GM23248 (cell line): ENCODE measurements at regions of chr9 and their contacts with region 1.

Region 1: GRCh38 chr9:6907772-6908381 is 150.1 kb downstream of the KDM4C start:
- DNase-seq: peak; percentile 48
- H3K4me3 ChIP-seq: no peak overlapping the region
- H3K27ac ChIP-seq: no peak overlapping the region
- H3K4me1 ChIP-seq: peaks cover 10% of the 10 kb centered on the region
- H3K27me3 ChIP-seq: no peaks in the 10 kb centered on the region

Region 2: GRCh38 chr9:7045361-7045760 is 137.5 kb after region 1 on chr9:
- in situ Hi-C with region 1: loop called (anchors 10 kb)
- DNase-seq: peak; percentile 49
- H3K4me3 ChIP-seq: no peak overlapping the region
- H3K27ac ChIP-seq: no peak overlapping the region
- H3K4me1 ChIP-seq: peaks cover 13% of the 10 kb centered on the region
- H3K27me3 ChIP-seq: no peaks in the 10 kb centered on the region

Region 3: DNA sequence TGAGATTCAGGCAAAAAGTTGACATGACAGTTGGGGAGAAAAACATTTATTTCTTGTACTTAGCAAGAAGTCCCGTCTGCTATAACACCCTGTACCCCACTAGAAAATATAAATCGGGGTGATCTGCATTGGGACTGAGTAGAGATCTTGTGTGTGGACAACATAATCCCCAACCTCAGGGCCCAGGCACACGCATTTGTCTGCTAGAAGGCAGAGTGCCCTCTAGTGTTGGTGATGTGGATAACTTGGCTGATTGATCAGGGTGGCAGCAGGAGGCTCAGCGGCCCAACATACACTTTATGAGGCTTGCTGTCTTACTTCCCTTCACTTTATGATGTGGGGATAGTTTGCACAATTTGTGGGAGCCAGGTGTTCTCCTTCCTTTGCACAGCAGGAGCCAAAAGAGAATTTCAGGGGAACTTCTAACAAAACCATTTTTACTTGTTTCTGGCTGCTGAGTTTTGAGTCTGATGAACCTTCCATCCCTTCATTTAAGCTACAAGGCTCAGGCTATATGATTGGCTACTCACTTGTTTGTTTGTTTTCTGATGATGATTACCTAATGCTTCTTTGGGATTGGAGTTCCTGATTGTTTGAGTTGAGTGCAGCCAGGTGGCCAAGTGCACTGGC is 628.5 kb after region 1 on chr9:
- in situ Hi-C with region 1: loop called (anchors 25 kb)
- DNase-seq: peak; percentile 68
- H3K4me3 ChIP-seq: no peak overlapping the region
- H3K27ac ChIP-seq: no peak overlapping the region
- H3K4me1 ChIP-seq: no peaks in the 10 kb centered on the region
- H3K27me3 ChIP-seq: no peaks in the 10 kb centered on the region; the same call in 1 of the 2 replicates

Region 4: GRCh38 chr9:7656636-7657035 is 748.8 kb after region 1 on chr9:
- in situ Hi-C with region 1: no loop called
- DNase-seq: no peak
- H3K4me3 ChIP-seq: no peak overlapping the region
- H3K27ac ChIP-seq: no peak overlapping the region
- H3K4me1 ChIP-seq: no peaks in the 10 kb centered on the region
- H3K27me3 ChIP-seq: no peaks in the 10 kb centered on the region